ENCODE measurements at regions of chr14 and their contacts with region 1.

Region 1: GRCh38 chr14:69726761-69727511 is 40.0 kb upstream of the SRSF5 start:
- DNase-seq: peak; percentile 82 to 94 (median 86)
- ATAC-seq: peak; percentile 93 to 97 (median 96)
- H3K4me3 ChIP-seq: peak overlapping the region in 11 of 12 donors; percentile 27 to 61 (median 51)
- H3K27ac ChIP-seq: peak overlapping the region in 11 of 12 donors; percentile 56 to 79 (median 69)
- H3K4me1 ChIP-seq: peaks cover 0 to 39% (median 7%) of the 10 kb centered on the region in 12 donors
- H3K27me3 ChIP-seq: no peaks in the 10 kb centered on the region
- CTCF ChIP-seq: peak; percentile 95 to 100 (median 99)
- POLR2A ChIP-seq: no peak

Region 2: GRCh38 chr14:69580009-69580577 is 146.8 kb before region 1 on chr14:
- intact Hi-C with region 1: loop called (anchors 1 to 5 kb)
- DNase-seq: peak in 2 of 5 donors; percentile 28 to 47
- ATAC-seq: peak in 3 of 4 donors; percentile 20 to 84 (median 83)
- H3K4me3 ChIP-seq: no peak overlapping the region
- H3K27ac ChIP-seq: no peak overlapping the region
- H3K4me1 ChIP-seq: peaks cover 0 to 7% (median 0%) of the 10 kb centered on the region in 12 donors
- H3K27me3 ChIP-seq: peaks cover 5 to 30% (median 19%) of the 10 kb centered on the region in 9 donors
- CTCF ChIP-seq: peak in 8 of 12 donors; percentile 25 to 38 (median 32)
- POLR2A ChIP-seq: no peak

Region 3: GRCh38 chr14:69600304-69600891 is 126.5 kb before region 1 on chr14:
- intact Hi-C with region 1: loop called in 9 of 10 experiments (anchors 1 to 5 kb)
- DNase-seq: no peak
- ATAC-seq: no peak
- H3K4me3 ChIP-seq: no peak overlapping the region
- H3K27ac ChIP-seq: no peak overlapping the region
- H3K4me1 ChIP-seq: no peaks in the 10 kb centered on the region
- H3K27me3 ChIP-seq: no peaks in the 10 kb centered on the region
- CTCF ChIP-seq: no peak
- POLR2A ChIP-seq: no peak

Region 4: GRCh38 chr14:69611201-69612011 is 115.5 kb before region 1 on chr14 and contains the start of gene SUSD6:
- intact Hi-C with region 1: loop called in 1 of 10 experiments (anchors 1 kb)
- DNase-seq: peak; percentile 93 to 95 (median 94)
- ATAC-seq: peak; percentile 80 to 92 (median 90)
- H3K4me3 ChIP-seq: peak within 1 kb of the TSS; percentile 76 to 96 (median 86)
- H3K27ac ChIP-seq: peak within 1 kb of the TSS; percentile 94 to 100 (median 98)
- H3K4me1 ChIP-seq: peaks cover 5 to 60% (median 51%) of the 10 kb centered on the region in 12 donors
- H3K27me3 ChIP-seq: no peaks in the 10 kb centered on the region
- CTCF ChIP-seq: no peak
- POLR2A ChIP-seq: peak in 1 of 2 donors; percentile 70
- total RNA-seq, gene SUSD6: 17.8 to 49.2 (median 24.8) TPM

Region 5: DNA sequence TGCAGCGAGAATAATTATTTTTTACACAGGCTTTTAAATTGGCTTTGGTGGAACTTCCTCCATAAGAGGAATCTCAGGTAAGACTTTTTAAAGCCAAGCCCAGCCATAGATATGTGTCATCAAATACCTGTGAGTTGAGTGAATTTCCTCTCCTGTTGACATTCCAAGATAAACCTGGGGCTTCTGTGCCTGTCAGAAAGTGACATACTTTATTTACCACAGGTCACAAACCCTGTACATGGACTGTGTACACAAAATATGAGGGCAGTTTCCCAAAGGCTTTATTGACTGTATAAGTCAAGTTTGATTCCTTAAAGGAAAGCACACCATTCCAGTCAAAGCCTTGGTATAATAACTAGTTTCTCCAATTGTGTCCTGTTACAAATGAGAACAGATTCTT is 14.1 kb after region 1 on chr14:
- intact Hi-C with region 1: no loop called
- DNase-seq: no peak
- ATAC-seq: no peak
- H3K4me3 ChIP-seq: no peak overlapping the region
- H3K27ac ChIP-seq: no peak overlapping the region
- H3K4me1 ChIP-seq: no peaks in the 10 kb centered on the region
- H3K27me3 ChIP-seq: no peaks in the 10 kb centered on the region
- CTCF ChIP-seq: no peak
- POLR2A ChIP-seq: no peak

Region 6: GRCh38 chr14:69766984-69767368 is 40.0 kb after region 1 on chr14 and contains the start of gene SRSF5:
- intact Hi-C with region 1: loop called in 1 of 10 experiments (anchors 2 kb)
- DNase-seq: peak; percentile 97 to 98 (median 97)
- ATAC-seq: peak; percentile 95 to 99 (median 98)
- H3K4me3 ChIP-seq: peak within 1 kb of the TSS; percentile 85 to 99 (median 96)
- H3K27ac ChIP-seq: peak within 1 kb of the TSS; percentile 98 to 100 (median 100)
- H3K4me1 ChIP-seq: peaks cover 0 to 46% (median 37%) of the 10 kb centered on the region in 12 donors
- H3K27me3 ChIP-seq: no peaks in the 10 kb centered on the region
- CTCF ChIP-seq: no peak
- POLR2A ChIP-seq: peak; percentile 80 to 97
- total RNA-seq, gene SRSF5: 63.8 to 197 (median 176) TPM

Region 7: DNA sequence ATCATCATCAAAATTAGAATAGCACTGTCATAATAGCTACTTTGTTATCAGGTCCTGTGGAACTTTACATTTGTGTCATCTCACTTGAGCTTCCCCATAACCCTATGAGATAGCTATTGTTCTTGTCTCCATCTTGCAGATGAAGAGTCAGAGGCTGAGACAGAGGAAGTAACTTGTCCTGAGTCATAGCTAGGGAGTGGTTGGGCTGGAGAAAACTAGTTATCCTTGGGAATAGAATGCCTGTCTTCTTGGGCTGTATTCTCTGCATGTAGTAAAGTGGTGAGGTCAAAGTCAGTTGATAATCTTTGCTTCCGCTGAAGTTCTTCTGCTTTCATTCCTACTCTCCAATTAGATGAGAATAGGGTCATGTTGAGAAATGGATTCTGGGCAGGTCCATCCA is 269.3 kb after region 1 on chr14:
- intact Hi-C with region 1: no loop called
- DNase-seq: no peak
- ATAC-seq: no peak
- H3K4me3 ChIP-seq: no peak overlapping the region
- H3K27ac ChIP-seq: no peak overlapping the region
- H3K4me1 ChIP-seq: peaks cover 0 to 6% (median 0%) of the 10 kb centered on the region in 12 donors
- H3K27me3 ChIP-seq: peaks cover 0 to 18% (median 0%) of the 10 kb centered on the region in 9 donors
- CTCF ChIP-seq: no peak
- POLR2A ChIP-seq: no peak